SK-N-SH (cell line): ENCODE measurements at regions of chr19 and their contacts with region 1.

Region 1: GRCh38 chr19:14472202-14472938 is 2.8 kb downstream of the PTGER1 start:
- DNase-seq: peak; percentile 96
- H3K4me3 ChIP-seq: no peak overlapping the region; a peak in 1 of 4 replicates
- H3K27ac ChIP-seq: no peak overlapping the region
- H3K4me1 ChIP-seq: peaks cover 20 to 30% of the 10 kb centered on the region in 2 experiments; a peak in 3 of 4 replicates
- H3K27me3 ChIP-seq: no peaks in the 10 kb centered on the region
- CTCF ChIP-seq: peak; percentile 87
- EP300 ChIP-seq: no peak
- RAD21 ChIP-seq: peak; percentile 49

Region 2: DNA sequence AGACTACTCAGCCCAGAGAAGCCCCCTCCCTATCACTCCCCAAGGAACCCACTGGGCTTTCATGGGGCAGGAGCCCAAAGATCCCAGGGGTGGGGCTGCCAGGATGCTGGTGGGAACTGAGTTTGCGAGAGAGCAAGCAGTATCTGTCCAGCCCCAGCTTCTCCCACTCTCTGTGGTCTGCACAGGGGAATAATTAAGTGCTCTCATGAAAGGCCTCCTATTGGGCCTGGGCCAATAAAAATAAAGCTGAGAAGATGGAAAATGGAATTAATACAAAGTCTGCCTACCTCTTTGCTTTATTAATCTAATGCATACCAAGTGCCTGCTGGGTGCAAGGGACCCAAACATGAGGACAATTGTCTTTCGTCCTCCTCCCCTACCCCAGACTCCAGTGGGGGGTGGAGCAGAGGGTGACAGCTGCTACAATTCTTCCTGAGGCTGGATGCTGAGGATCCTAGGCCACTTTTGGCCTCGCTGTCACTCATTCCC is 58.6 kb before region 1 on chr19:
- CTCF ChIA-PET with region 1: interaction called, 13 read pairs
- POLR2A ChIA-PET with region 1: no interaction called
- DNase-seq: peak; percentile 73
- H3K4me3 ChIP-seq: no peak overlapping the region
- H3K27ac ChIP-seq: peak overlapping the region; percentile 51 to 54; a peak in 3 of 4 replicates
- H3K4me1 ChIP-seq: peaks cover 14 to 15% of the 10 kb centered on the region in 2 experiments; a peak in 2 of 4 replicates
- H3K27me3 ChIP-seq: no peaks in the 10 kb centered on the region
- CTCF ChIP-seq: no peak
- EP300 ChIP-seq: no peak
- RAD21 ChIP-seq: no peak

Region 3: GRCh38 chr19:14450168-14450874 is 22.0 kb before region 1 on chr19:
- CTCF ChIA-PET with region 1: interaction called, 15 read pairs
- POLR2A ChIA-PET with region 1: interaction called, 3 read pairs
- DNase-seq: peak; percentile 95
- H3K4me3 ChIP-seq: no peak overlapping the region
- H3K27ac ChIP-seq: no peak overlapping the region
- H3K4me1 ChIP-seq: no peaks in the 10 kb centered on the region
- H3K27me3 ChIP-seq: no peaks in the 10 kb centered on the region
- CTCF ChIP-seq: no peak
- EP300 ChIP-seq: no peak
- RAD21 ChIP-seq: no peak